Breast epithelium (tissue), 4 donors: ENCODE measurements at regions of chr4 and their contacts with region 1.

Region 1: DNA sequence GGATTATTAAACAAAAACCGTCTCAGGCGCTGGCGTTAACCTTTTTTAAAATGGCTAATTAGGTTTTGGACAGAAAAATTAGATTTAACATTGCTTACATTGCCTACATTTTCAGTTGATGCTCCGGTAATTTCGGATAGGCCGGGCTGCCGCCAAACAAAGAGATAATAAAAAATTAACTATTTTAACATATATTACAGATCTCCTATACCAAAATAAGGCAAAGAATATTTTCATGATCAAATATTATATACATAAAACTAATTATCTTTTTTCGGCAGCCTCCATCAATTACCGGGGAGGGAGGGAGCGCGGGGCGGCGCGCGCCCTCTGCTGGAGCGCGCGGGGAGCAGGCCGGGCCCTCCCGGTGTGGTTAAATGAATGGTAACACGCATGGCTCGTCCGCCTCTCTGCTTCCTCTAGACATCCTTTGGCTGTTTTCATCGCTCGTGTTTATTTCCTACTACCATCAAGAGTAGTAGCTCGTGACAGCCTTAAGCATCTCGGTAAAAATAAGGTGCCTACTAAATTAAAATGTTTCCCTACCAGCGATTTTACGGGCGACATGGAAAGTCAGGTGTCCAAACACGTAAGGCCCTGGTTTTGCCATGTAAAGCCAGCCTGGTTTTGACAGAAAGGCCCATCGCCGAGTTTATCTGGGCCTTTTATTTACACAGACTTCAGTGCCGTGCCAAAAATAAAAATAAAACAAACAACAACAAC is 52.4 kb upstream of the TMEM33 start:
- DNase-seq: peak in 1 of 2 donors; percentile 54
- H3K4me3 ChIP-seq: peak overlapping the region; percentile 30 to 64 (median 39)
- H3K27ac ChIP-seq: no peak overlapping the region
- H3K4me1 ChIP-seq: peaks cover 0 to 12% of the 10 kb centered on the region in 2 donors
- H3K27me3 ChIP-seq: peaks cover 0 to 48% of the 10 kb centered on the region in 2 donors
- CTCF ChIP-seq: peak; percentile 29 to 68 (median 65)
- POLR2A ChIP-seq: no peak

Region 2: DNA sequence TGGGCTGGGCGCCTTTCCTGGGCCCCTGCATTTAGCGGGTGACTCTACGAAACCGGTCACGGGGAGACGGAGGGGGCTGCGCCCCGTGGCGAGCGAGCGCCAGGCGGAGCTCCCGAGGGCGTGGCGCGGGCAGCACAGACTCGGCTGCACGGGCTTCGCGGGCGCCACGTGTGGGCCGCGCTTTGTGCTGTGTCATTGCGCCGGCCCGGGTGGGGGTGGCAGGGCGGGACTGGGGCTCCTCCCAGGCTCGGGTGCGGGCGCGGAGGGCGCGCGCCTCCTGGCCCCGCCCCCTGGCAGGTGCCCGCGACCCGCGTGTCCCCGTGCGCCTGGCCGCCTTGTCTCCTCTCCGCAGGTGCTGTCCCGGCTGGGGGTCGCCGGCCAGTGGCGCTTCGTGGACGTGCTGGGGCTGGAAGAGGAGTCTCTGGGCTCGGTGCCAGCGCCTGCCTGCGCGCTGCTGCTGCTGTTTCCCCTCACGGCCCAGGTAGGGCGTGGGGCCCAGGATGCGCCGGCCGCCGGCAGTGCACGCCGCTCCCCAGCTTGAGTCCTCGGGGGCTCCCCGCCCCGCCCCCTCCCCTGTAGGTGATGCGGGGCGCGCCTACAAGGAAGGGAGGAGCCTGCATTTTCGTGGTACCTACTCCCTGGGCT is 625.4 kb before region 1 on chr4:
- intact Hi-C with region 1: loop called (anchors 10 kb)
- DNase-seq: no peak
- H3K4me3 ChIP-seq: peak overlapping the region; percentile 44 to 70 (median 61)
- H3K27ac ChIP-seq: no peak overlapping the region
- H3K4me1 ChIP-seq: peaks cover 0 to 5% of the 10 kb centered on the region in 2 donors
- H3K27me3 ChIP-seq: peaks cover 0 to 19% of the 10 kb centered on the region in 2 donors
- CTCF ChIP-seq: no peak
- POLR2A ChIP-seq: no peak

Region 3: GRCh38 chr4:41418444-41418843 is 464.3 kb before region 1 on chr4:
- intact Hi-C with region 1: loop called (anchors 10 kb)
- DNase-seq: peak; percentile 40 to 64
- H3K4me3 ChIP-seq: peak overlapping the region in 1 of 3 donors; percentile 15
- H3K27ac ChIP-seq: peak overlapping the region in 1 of 2 donors; percentile 32
- H3K4me1 ChIP-seq: no peaks in the 10 kb centered on the region
- H3K27me3 ChIP-seq: no peaks in the 10 kb centered on the region
- CTCF ChIP-seq: no peak
- POLR2A ChIP-seq: no peak